Common myeloid progenitor, CD34-positive (primary cell): ENCODE measurements at regions of chr18 and their contacts with region 1.

Region 1: GRCh38 chr18:13464432-13465123 is 246.0 kb downstream of the LDLRAD4 start:
- DNase-seq: peak; percentile 85 to 93 (median 86)
- H3K4me3 ChIP-seq: peak overlapping the region in 6 of 7 experiments; percentile 30 to 67 (median 48)
- H3K27ac ChIP-seq: peak overlapping the region; percentile 67 to 80
- H3K4me1 ChIP-seq: peaks cover 7 to 57% (median 50%) of the 10 kb centered on the region in 4 experiments
- H3K27me3 ChIP-seq: no peaks in the 10 kb centered on the region

Region 2: GRCh38 chr18:13375302-13376255 is 89.0 kb before region 1 on chr18:
- CTCF ChIA-PET with region 1: no interaction called
- POLR2A ChIA-PET with region 1: no interaction called
- DNase-seq: peak in 2 of 3 donors; percentile 60 to 66
- H3K4me3 ChIP-seq: no peak overlapping the region
- H3K27ac ChIP-seq: no peak overlapping the region
- H3K4me1 ChIP-seq: peaks cover 0 to 35% (median 9%) of the 10 kb centered on the region in 4 experiments
- H3K27me3 ChIP-seq: no peaks in the 10 kb centered on the region

Region 3: DNA sequence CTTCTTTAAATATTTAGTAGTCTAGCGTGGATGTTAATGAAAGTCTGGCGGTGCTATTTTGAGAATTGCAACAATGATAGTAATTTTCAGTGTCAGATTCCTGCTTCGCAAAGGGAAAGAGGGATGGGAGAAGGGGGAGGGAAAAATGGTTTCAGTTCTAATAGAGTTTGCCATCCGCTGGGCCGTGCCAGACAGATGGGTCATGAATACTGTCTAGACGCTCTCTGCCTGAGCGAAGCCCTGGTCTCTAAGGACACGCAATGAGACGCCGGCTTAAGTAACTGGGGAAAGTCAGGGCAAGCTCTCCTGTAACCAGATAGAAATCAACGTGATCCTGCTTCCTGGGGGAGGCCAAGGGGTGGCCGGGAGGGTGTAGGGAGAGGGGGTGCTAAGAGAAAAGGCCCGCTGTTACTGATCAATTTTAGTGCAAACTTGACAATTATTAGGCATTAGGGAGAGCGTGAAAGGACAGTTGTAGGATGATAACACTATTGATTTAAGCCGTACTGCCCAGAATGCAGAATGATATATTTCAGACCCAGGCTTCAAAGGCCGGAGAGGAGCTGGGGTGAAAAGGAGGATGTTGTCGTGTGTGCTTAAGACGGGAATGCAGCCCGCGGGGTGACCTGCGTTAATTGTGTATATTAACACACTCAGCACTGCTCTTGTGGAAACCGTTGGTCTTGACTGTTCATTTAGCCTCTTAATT is 16.8 kb before region 1 on chr18:
- CTCF ChIA-PET with region 1: interaction called, 10 read pairs
- POLR2A ChIA-PET with region 1: interaction called, 3 read pairs
- DNase-seq: no peak
- H3K4me3 ChIP-seq: no peak overlapping the region
- H3K27ac ChIP-seq: no peak overlapping the region
- H3K4me1 ChIP-seq: peaks cover 2 to 26% (median 22%) of the 10 kb centered on the region in 4 experiments
- H3K27me3 ChIP-seq: no peaks in the 10 kb centered on the region

Region 4: GRCh38 chr18:13513021-13513420 is 48.4 kb after region 1 on chr18:
- CTCF ChIA-PET with region 1: no interaction called
- POLR2A ChIA-PET with region 1: no interaction called
- DNase-seq: peak in 2 of 3 donors; percentile 36 to 68
- H3K4me3 ChIP-seq: peak overlapping the region in 1 of 7 experiments; percentile 7
- H3K27ac ChIP-seq: no peak overlapping the region
- H3K4me1 ChIP-seq: peaks cover 16 to 31% (median 28%) of the 10 kb centered on the region in 4 experiments
- H3K27me3 ChIP-seq: no peaks in the 10 kb centered on the region

Region 5: GRCh38 chr18:13525381-13526029 is 60.9 kb after region 1 on chr18:
- CTCF ChIA-PET with region 1: no interaction called
- POLR2A ChIA-PET with region 1: no interaction called
- DNase-seq: no peak
- H3K4me3 ChIP-seq: no peak overlapping the region
- H3K27ac ChIP-seq: no peak overlapping the region
- H3K4me1 ChIP-seq: peaks cover 3 to 17% (median 13%) of the 10 kb centered on the region in 4 experiments
- H3K27me3 ChIP-seq: no peaks in the 10 kb centered on the region